ENCODE measurements at regions of chr16 and their contacts with region 1.

Region 1: DNA sequence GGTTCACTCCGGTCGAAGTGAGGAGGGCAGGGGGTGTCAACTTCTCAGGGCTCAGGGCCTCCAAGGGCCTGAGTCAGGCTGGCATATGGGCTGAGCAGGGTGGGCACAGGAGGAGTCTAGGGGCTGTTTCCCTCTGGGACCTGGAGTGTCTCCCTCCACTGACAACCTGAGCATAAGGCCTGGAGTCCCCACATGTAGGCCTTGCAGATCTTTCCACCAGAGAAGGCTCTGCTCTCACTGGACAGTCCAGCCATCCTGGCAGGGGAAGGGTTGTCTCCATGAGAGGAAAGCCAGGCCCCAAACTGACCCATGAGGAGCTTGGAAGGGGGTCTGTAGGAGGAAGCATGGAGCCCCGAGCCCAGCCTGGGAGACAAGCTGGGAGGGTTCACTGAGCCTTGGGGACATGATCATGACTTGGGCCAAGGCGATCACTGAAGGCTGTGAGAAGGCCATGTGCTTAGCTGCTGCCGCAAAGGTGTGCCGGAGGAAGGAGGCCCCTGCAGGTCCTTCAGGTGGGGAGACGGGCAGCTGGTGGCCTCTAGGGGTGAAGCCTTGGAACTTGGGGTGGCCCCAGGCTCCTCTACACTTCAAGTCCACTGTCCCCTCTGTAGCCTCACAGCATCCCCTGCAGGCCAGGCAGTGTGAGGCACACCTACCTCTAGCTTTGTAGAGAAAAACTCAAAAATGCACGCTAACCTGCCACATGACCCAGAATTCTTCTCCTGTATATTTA is 9.9 kb downstream of the CMTM2 start:
- DNase-seq: peak; percentile 81
- H3K4me3 Mint-ChIP-seq: peak overlapping the region; percentile 65
- H3K27ac Mint-ChIP-seq: peak overlapping the region; percentile 55
- H3K4me1 Mint-ChIP-seq: peaks cover 56% of the 10 kb centered on the region
- H3K27me3 Mint-ChIP-seq: peaks cover 9% of the 10 kb centered on the region

Region 2: DNA sequence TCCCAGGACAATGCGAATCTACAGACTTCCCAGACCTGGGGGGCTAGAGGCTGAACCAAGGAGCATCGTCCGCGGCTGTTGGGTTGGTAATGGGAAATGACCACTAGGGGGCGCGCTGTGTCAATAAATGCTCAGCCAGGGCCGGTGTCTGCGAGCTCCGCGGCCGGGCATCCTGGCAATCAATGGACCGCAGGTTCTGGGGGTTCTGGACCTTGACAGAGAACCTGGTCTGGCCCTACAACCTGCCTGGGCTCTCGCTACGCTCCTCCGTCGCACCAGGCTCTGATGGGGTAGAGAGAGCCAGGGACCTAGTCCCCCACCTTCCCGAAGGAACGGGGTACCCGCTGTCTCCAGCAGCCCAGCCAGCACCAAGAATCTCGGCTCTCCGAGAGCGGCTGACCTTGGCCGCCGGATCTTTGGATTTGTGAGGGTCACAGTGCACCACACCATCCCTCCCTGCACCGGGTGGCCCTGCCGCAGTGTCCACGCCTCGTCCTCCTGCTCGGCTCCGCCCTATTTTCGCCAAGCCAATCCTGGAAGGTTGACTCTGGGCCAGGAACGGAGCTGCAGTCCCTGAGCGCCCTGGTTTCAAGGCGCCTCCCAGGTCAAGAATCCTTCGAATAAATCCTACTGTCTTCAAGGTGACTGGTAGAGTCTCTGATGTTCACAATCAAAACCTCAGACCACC is 182.5 kb before region 1 on chr16:
- CTCF ChIA-PET with region 1: interaction called, 57 read pairs
- DNase-seq: peak; percentile 91
- H3K4me3 Mint-ChIP-seq: peak overlapping the region; percentile 78
- H3K27ac Mint-ChIP-seq: peak overlapping the region; percentile 24
- H3K4me1 Mint-ChIP-seq: peaks cover 32% of the 10 kb centered on the region
- H3K27me3 Mint-ChIP-seq: peaks cover 35% of the 10 kb centered on the region

Region 3: DNA sequence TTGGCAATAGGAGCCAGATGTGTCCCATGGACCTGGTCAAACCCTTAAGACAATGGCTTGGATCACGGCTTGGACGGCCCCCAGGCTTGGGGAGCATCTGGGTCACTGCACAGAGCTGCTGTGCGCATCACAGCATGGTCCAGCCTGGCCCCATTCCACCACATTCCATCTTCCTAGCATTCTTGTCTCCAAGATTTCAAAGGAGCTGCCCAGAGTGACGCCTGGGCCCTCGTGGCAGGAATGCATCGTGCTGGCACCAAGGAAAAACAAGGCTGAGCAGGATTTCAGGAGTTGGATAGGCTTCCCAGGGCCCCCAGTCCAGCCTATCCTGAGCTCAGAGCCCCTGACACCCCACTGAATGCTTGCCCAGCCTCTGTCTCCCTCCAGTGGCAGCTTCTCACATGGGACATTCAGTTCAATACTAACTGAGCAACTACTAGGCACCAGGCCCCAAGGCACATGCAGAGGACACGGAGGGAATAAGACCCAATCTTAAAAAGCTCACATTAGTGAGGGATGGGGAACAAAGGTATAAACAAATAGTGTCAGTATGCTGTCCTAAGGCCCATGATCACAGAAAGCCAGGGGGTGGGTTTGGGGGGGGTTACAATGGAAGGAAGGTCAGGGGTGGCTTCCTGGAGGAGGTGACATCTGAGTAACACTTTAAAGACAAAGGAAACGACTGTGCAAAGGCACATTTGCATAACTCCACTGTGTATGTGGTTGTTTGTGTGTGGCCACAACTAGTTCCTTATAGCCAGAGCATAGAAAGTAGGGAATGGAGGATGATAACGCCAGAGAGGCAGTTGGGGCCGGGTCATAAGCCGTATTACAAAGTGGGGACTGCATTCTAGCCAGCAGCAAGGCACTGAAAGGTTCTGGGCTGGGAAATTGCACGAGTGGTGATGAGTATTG is 73.3 kb before region 1 on chr16:
- CTCF ChIA-PET with region 1: interaction called, 37 read pairs
- DNase-seq: peak; percentile 54
- H3K4me3 Mint-ChIP-seq: peak overlapping the region; percentile 52
- H3K27ac Mint-ChIP-seq: peak overlapping the region; percentile 91
- H3K4me1 Mint-ChIP-seq: peaks cover 66% of the 10 kb centered on the region
- H3K27me3 Mint-ChIP-seq: peaks cover 4% of the 10 kb centered on the region

Region 4: GRCh38 chr16:66552286-66553177 is 36.6 kb before region 1 on chr16 and contains the start of gene CKLF:
- CTCF ChIA-PET with region 1: interaction called, 31 read pairs
- DNase-seq: peak; percentile 92
- H3K4me3 Mint-ChIP-seq: peak within 1 kb of the TSS; percentile 89
- H3K27ac Mint-ChIP-seq: peak within 1 kb of the TSS; percentile 92
- H3K4me1 Mint-ChIP-seq: peaks cover 79% of the 10 kb centered on the region
- H3K27me3 Mint-ChIP-seq: peaks cover 4% of the 10 kb centered on the region

Region 5: DNA sequence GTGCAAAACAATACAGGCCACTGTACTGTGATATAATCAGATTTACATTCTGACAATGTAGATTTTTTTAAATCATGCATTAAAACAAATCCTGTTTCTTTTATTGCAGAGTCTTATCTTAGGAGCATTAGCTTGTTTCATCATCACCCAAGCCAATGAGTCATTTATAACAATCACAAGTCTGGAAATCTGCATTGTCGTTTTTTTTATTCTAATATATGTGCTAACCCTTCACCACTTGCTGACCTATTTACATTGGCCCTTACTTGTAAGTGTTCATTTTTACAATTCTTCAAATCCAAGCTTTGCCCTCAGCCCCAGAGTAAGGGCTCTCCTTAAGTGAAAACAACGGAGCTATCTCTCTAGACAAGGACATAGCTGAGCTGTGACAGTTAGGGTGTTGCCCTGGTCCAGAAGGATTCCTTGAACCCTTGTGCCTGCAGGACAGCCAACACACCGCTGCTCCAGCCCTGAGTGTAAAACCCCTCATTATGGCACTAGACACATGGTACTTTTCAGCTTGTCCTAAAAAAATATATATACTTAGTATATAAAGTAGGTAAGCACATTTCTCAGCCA is 19.2 kb before region 1 on chr16:
- CTCF ChIA-PET with region 1: interaction called, 35 read pairs
- DNase-seq: no peak
- H3K4me3 Mint-ChIP-seq: no peak overlapping the region
- H3K27ac Mint-ChIP-seq: no peak overlapping the region
- H3K4me1 Mint-ChIP-seq: peaks cover 4% of the 10 kb centered on the region
- H3K27me3 Mint-ChIP-seq: no peaks in the 10 kb centered on the region

Measured in activated naive CD4-positive, alpha-beta T cell treated with anti-CD3 and anti-CD28 coated beads, Interleukin-2, amount 10 ng/mL, durations not matched to agents 7 days and 5 days (primary cell).